ENCODE measurements at regions of chr19 and their contacts with region 1.

Region 1: DNA sequence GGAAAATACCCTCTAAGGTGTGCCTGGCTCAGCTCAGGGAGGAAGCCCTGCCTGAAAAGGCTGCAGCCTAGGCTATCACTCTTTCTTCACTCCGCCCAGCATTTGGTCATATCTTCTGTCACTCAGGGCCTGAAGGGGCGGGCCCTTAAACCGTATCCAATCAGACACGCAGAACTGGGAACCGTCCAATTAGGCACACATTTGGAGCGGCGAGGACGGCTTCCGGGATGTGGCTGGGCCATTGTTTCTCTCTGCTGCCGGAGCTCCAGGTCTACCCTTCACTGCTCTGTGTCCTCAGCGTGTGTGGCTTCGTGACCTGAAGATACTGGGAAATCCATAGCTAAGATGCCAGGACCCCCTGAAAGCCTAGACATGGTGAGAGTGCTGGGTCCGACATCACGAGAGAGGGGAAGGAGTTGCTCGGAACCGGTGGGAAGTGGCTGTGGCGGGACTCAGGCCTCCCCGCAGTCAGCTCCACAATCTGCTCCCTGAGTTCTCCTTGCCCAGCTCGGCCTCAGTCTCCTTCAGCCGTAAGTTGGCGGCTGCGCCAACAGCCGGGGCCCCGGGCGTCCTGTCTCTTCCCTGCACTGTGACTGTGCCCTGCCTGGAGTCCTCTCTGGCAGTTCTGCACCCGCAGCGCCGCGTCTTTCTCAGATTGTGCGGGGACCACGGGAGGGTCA is at the start of gene ZNF493:
- DNase-seq: peak; percentile 70
- ATAC-seq: peak; percentile 100
- H3K4me3 ChIP-seq: peak within 1 kb of the TSS; percentile 80 to 92
- H3K27ac ChIP-seq: peak within 1 kb of the TSS; percentile 77
- H3K4me1 ChIP-seq: no peaks in the 10 kb centered on the region
- H3K27me3 ChIP-seq: no peaks in the 10 kb centered on the region
- CTCF ChIP-seq: no peak
- total RNA-seq, gene ZNF493: 8.5 TPM

Region 2: DNA sequence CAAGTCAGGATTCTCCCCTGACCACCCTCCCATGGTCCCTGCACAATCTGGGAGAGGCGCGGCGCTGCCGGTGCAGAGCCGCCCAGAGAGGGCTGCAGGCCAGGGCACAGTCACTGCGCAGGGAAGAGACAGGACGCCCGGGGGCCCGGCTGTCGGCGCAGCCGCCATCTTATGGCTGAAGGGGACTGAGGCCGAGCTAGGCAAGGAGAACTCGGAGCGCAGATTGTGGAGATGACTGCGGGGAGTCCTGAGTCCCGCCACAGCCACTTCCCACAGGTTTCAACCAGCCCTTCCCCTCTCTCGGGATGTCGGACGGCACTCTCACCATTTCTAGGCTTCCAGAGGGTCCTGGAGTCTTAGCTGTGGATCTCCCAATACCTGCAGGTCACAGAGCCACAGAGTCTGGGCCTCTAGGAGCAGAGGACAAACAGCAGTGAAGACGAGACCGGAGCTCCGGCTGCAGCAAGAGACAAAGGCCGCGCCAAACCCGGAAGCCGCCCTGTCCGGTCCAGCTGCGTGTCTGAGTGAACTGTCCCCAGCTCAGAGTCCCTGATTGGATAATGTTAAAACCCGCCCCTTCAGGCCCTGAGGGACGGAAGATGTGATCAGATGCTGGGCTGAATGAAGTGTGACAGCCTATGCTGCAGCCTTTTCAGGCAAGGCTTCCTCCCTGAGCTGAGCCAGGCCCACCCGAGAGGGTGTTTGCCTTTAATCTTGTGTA is 68.0 kb before region 1 on chr19 and contains the start of gene ZNF708:
- CTCF ChIA-PET with region 1: interaction called, 3 read pairs
- POLR2A ChIA-PET with region 1: interaction called, 11 read pairs
- in situ Hi-C with region 1: no loop called
- intact Hi-C with region 1: no loop called
- DNase-seq: peak; percentile 71
- ATAC-seq: peak; percentile 100
- H3K4me3 ChIP-seq: peak within 1 kb of the TSS; percentile 68 to 91
- H3K27ac ChIP-seq: peak within 1 kb of the TSS; percentile 84
- H3K4me1 ChIP-seq: peaks cover 5% of the 10 kb centered on the region; the same call in 1 of the 2 replicates
- H3K27me3 ChIP-seq: no peaks in the 10 kb centered on the region
- CTCF ChIP-seq: no peak
- total RNA-seq, gene ZNF708: 8.3 TPM

Measured in Panc1 (cell line).